Kidney (tissue), 22 donors: ENCODE measurements at regions of chr20 and their contacts with region 1.

Region 1: GRCh38 chr20:17898548-17898994 is 70.0 kb downstream of the SNX5 start:
- DNase-seq: peak in 4 of 5 donors; percentile 70 to 82 (median 77)
- H3K4me3 ChIP-seq: peak overlapping the region in 1 of 3 donors; percentile 22
- H3K27ac ChIP-seq: no peak overlapping the region
- H3K4me1 ChIP-seq: peaks cover 2 to 9% (median 3%) of the 10 kb centered on the region in 3 donors
- H3K27me3 ChIP-seq: no peaks in the 10 kb centered on the region
- CTCF ChIP-seq: peak; percentile 98

Region 2: DNA sequence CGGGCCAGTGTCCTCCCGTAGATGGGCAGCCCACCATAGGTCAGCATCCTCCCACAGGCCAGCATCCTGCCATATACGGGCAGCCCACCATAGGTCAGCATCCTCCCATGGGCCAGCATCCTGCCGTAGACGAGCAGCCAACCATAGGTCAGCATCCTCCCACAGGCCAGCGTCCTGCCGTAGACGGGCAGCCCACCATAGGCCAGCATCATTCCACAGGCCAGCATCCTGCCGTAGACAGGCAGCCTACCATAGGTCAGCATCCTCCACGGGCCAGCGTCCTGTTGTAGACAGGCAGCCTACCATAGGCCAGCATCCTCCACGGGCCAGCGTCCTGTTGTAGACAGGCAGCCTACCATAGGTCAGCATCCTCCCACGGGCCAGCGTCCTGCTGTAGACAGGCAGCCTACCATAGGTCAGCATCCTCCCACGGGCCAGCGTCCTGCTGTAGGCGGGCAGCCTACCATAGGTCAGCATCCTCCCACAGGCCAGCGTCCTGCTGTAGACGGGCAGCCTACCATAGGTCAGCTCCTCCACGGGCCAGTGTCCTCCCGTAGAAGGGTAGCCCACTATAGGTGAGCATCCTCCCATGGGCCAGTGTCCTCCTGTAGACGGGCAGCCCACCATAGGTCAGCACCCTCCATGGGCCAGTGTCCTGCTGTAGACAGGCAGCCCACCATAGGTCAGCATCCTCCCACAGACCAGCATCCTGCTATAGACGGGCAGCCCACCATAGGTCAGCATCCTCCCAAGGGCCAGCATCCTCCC is 430.3 kb before region 1 on chr20:
- intact Hi-C with region 1: no loop called
- DNase-seq: no peak
- H3K4me3 ChIP-seq: no peak overlapping the region
- H3K27ac ChIP-seq: no peak overlapping the region
- H3K4me1 ChIP-seq: no peaks in the 10 kb centered on the region
- H3K27me3 ChIP-seq: no peaks in the 10 kb centered on the region
- CTCF ChIP-seq: no peak

Region 3: DNA sequence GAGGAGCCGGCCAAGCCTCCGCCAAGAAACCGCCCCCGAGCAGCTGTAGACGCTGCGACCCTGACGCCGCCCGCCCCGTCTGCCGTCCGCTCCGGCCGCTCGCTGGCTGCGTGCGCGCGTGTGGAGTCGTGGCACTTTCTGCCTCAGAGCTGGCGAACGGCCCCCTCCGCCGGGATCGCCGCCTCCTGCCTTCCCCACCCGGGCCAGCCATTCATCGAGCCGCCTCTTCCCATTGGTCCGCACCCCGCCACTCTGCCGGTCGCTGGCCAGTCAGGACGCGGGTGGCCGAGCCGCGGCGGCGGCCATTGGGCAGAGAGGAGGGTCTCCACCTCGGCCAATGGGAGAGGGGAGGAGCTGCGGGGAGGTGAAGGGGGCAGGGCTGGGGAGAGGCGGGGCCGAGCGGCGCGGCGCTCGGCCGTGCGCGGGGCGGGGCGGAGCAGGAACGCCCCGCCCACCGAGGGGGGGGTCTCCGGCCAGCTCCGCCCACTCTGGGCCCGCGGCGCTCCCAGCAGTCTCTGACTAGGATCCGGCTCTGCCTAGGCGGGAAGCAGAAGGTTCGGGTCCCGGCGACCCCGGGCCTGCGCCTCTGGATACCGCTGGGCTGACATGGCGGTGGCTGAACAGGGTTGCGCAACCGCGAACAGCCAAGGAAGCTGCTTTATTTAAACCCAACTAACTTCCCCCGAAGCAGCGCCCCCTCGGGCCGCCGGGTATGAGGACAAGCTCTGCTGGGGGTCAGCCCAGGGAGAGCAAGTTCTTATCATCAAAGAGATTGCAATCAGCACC is 216.3 kb before region 1 on chr20 and contains the start of gene RRBP1:
- intact Hi-C with region 1: loop called (anchors 5 kb)
- DNase-seq: peak; percentile 99 to 100 (median 99)
- H3K4me3 ChIP-seq: peak within 1 kb of the TSS; percentile 55 to 77 (median 62)
- H3K27ac ChIP-seq: peak within 1 kb of the TSS; percentile 92 to 95
- H3K4me1 ChIP-seq: peaks cover 0 to 29% (median 23%) of the 10 kb centered on the region in 3 donors
- H3K27me3 ChIP-seq: no peaks in the 10 kb centered on the region
- CTCF ChIP-seq: peak; percentile 31
- total RNA-seq, gene RRBP1: 231 TPM